Activated T-helper 2 cell treated with anti-CD3 and anti-CD28 coated beads, Interferon-gamma antibody, Interleukin-2, Interleukin-4, amounts not matched to agents 10 μg/mL and 5 μg/mL and 100 μg/mL, durations not matched to agents 14 hours and 24 hours and 36 hours (primary cell): ENCODE measurements at regions of chr1 and their contacts with region 1.

Region 1: DNA sequence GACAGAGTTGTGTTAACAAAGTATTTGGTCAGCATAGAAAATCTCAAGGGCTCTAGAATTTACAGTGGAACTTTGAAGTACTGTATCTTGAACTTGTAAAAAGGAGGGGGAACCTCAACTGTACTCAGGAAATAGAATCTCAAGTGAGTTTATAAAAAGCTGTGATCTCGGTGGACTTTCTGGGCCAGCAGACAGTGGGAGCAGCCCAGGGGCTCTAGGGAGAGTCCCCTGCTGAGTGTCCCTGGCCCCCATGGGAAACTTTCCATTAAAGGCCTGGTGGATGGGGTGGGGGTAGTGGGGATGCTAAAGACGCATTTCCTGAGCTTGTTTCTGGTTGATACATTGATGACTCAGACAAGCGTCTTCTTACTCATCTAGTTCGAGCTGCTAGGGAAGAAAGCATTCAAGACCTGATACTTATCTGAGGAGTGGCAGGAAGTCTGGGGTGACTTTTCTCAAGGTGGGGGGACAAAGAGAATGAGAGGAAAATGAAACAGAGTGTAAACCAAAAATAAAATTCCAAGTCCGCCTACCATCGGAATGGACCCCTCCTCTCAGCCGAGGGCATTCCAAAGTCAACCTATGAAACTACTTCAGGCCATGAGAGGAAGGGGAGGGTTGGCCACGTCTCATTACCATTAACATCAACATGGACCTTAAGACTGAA is 65.5 kb downstream of the NID1 start:
- DNase-seq: peak; percentile 75
- H3K4me3 Mint-ChIP-seq: peak overlapping the region; percentile 54
- H3K27ac Mint-ChIP-seq: peak overlapping the region; percentile 96
- H3K4me1 Mint-ChIP-seq: peaks cover 50% of the 10 kb centered on the region
- H3K27me3 Mint-ChIP-seq: no peaks in the 10 kb centered on the region

Region 2: GRCh38 chr1:235495551-235495950 is 503.8 kb before region 1 on chr1:
- intact Hi-C with region 1: loop called (anchors 2 kb)
- DNase-seq: no peak
- H3K4me3 Mint-ChIP-seq: no peak overlapping the region
- H3K27ac Mint-ChIP-seq: no peak overlapping the region
- H3K4me1 Mint-ChIP-seq: peaks cover 22% of the 10 kb centered on the region
- H3K27me3 Mint-ChIP-seq: no peaks in the 10 kb centered on the region

Region 3: DNA sequence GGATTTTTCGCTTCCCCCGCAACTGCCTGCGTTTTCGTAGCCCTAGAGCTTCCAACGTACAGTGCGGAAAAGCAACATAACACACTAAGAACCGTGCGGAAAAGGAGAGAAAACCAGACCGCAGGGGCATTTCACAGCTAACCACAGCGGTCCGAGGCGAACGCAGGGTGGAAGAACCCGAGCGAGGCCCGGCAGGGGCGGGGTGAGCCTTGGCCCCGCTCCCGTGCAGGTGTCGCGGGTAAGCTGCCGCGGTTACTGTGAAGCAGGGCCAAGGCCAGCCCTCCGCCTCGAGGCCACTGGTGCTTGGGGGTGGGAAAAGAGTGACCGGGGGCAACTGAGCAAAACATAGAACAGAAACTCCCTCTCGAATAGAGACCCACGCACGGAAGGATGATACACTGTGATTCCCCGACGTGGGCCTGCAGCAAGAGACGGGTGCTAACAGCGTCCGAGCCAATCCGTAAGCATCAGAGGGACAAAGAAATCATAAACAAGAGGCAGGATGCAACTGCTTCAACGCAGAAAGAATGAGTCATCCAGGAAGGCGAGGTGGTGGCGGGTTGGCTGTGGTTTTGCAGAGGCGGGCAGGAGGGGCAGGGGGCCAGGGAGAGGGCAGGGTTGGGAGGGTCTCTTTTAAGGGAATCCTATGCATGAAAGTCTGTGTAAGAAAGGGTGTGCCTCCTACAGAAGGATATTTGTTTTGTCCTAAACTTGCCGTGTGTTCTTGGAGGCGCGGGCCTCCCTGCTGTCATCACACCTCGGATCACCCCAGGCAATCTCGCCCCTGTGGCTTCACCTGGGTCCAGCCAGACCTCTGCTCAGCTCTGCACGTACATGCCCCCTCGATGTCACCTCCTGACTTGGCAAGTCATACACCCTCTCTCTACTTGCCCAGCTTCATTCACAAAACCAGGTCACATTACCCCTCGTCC is 357.1 kb before region 1 on chr1:
- intact Hi-C with region 1: loop called (anchors 1 kb)
- DNase-seq: peak; percentile 75
- H3K4me3 Mint-ChIP-seq: peak overlapping the region; percentile 65
- H3K27ac Mint-ChIP-seq: peak overlapping the region; percentile 95
- H3K4me1 Mint-ChIP-seq: peaks cover 73% of the 10 kb centered on the region
- H3K27me3 Mint-ChIP-seq: peaks cover 11% of the 10 kb centered on the region

Region 4: GRCh38 chr1:235855811-235856429 is 143.5 kb before region 1 on chr1:
- intact Hi-C with region 1: loop called (anchors 1 kb)
- DNase-seq: no peak
- H3K4me3 Mint-ChIP-seq: no peak overlapping the region
- H3K27ac Mint-ChIP-seq: peak overlapping the region; percentile 86
- H3K4me1 Mint-ChIP-seq: peaks cover 48% of the 10 kb centered on the region
- H3K27me3 Mint-ChIP-seq: no peaks in the 10 kb centered on the region

Region 5: GRCh38 chr1:235910357-235911299 is 88.8 kb before region 1 on chr1:
- intact Hi-C with region 1: loop called (anchors 1 kb)
- DNase-seq: no peak
- H3K4me3 Mint-ChIP-seq: no peak overlapping the region
- H3K27ac Mint-ChIP-seq: peak overlapping the region; percentile 86
- H3K4me1 Mint-ChIP-seq: peaks cover 38% of the 10 kb centered on the region
- H3K27me3 Mint-ChIP-seq: peaks cover 8% of the 10 kb centered on the region

Region 6: DNA sequence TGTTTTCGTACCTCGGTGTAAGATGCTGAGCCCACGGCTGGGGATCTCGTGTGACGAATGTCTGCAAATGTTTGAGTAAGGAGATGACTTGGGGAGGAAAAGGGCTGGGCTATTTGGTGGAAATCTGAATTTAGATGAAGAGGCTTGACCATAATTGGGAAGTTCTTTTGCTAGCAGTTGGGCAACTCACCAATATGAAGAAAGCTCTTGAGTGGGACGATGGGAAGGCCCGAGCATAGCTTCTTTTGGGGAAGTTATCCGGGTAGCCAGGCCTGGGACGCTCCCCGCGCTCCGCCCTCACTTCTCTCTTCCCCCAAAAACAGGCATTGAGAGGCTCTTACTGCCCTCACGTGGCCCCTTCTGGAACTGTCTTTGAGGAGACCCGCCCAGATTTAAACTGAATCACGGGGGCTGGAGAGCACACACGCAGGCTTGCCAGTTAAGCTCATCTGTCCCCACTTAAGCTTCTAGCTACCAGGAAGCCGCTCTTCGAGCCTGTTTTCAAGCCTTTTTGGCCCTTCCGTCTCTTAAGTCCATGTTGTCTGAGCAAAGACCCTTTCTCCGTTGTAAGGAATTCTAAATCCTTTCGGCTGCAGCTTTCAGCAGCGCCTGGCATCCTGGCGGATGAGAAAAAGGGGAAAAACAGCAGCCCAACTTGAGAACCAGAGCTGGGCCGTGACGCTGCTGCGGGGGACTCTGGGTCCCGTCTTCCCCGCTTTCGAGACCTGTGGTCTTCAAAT is 27.7 kb before region 1 on chr1:
- intact Hi-C with region 1: loop called (anchors 2 kb)
- DNase-seq: peak; percentile 78
- H3K4me3 Mint-ChIP-seq: peak overlapping the region; percentile 48
- H3K27ac Mint-ChIP-seq: peak overlapping the region; percentile 79
- H3K4me1 Mint-ChIP-seq: peaks cover 23% of the 10 kb centered on the region
- H3K27me3 Mint-ChIP-seq: peaks cover 14% of the 10 kb centered on the region

Region 7: GRCh38 chr1:236009857-236010256 is 10.5 kb after region 1 on chr1:
- intact Hi-C with region 1: no loop called
- DNase-seq: no peak
- H3K4me3 Mint-ChIP-seq: no peak overlapping the region
- H3K27ac Mint-ChIP-seq: no peak overlapping the region
- H3K4me1 Mint-ChIP-seq: peaks cover 2% of the 10 kb centered on the region
- H3K27me3 Mint-ChIP-seq: peaks cover 2% of the 10 kb centered on the region

Region 8: GRCh38 chr1:236099355-236099974 is 100.1 kb after region 1 on chr1:
- intact Hi-C with region 1: no loop called
- DNase-seq: no peak
- H3K4me3 Mint-ChIP-seq: no peak overlapping the region
- H3K27ac Mint-ChIP-seq: no peak overlapping the region
- H3K4me1 Mint-ChIP-seq: peaks cover 2% of the 10 kb centered on the region
- H3K27me3 Mint-ChIP-seq: peaks cover 5% of the 10 kb centered on the region

Region 9: GRCh38 chr1:236795035-236795756 is 795.8 kb after region 1 on chr1 and contains the start of gene MTR:
- intact Hi-C with region 1: loop called (anchors 10 kb)
- DNase-seq: peak; percentile 94
- H3K4me3 Mint-ChIP-seq: peak within 1 kb of the TSS; percentile 92
- H3K27ac Mint-ChIP-seq: peak within 1 kb of the TSS; percentile 98
- H3K4me1 Mint-ChIP-seq: peaks cover 32% of the 10 kb centered on the region
- H3K27me3 Mint-ChIP-seq: peaks cover 10% of the 10 kb centered on the region
- total RNA-seq, gene MTR: 59.2 and 62.2 TPM in 2 replicates